HCT116 (cell line): ENCODE measurements at regions of chr20 and their contacts with region 1.

Region 1: DNA sequence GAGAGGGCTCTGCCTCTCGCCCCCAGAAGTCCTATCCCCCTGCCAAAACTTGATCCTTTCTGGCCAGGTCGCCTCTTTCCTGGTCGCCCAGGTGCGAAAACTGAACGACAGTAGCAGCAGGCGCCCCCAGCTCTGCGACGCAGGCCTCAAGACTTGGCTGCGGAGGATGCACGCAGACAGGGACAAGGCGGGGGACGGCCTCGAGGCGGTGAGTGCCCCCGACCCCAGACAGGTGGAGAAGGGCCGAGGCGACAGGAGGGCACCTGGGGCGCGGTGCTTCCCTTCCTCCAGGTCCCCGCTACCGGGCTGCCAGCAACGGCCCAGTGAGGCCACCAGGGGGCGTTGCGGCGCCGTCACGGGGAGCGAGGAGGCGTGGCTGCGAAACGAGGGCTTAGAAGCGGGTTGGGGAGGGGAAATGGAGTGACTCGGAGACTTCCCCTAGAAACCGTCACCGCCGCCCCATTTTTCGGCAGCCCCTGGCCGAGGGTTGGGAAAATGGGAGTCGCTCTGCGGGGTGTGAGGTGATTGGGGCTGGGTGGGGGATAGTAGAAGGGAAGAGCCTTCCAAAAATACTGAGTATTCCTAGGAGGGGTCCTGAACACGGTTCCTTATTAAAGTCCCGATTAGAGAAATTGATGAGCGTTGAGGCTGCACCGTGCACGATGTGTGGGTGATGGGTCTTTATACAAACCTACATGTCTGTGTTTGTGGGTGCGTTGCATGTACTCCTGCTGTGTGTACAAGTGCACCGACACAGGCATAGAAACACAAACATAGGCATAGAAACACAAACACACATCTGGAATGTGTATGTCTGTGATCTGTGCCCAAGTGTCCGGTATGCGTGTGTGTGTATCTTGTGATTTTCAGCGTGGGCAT is 44.6 kb downstream of the ARHGAP40 start:
- DNase-seq: peak; percentile 43
- ATAC-seq: peak; percentile 93
- H3K4me3 ChIP-seq: peak overlapping the region; percentile 32 to 40
- H3K27ac ChIP-seq: no peak overlapping the region
- H3K4me1 ChIP-seq: peaks cover 2 to 12% of the 10 kb centered on the region in 2 experiments; a peak in 3 of 4 replicates
- H3K27me3 ChIP-seq: no peaks in the 10 kb centered on the region
- CTCF ChIP-seq: peak; percentile 84 to 93 (median 89)
- POLR2A ChIP-seq: no peak
- RAD21 ChIP-seq: peak; percentile 95

Region 2: DNA sequence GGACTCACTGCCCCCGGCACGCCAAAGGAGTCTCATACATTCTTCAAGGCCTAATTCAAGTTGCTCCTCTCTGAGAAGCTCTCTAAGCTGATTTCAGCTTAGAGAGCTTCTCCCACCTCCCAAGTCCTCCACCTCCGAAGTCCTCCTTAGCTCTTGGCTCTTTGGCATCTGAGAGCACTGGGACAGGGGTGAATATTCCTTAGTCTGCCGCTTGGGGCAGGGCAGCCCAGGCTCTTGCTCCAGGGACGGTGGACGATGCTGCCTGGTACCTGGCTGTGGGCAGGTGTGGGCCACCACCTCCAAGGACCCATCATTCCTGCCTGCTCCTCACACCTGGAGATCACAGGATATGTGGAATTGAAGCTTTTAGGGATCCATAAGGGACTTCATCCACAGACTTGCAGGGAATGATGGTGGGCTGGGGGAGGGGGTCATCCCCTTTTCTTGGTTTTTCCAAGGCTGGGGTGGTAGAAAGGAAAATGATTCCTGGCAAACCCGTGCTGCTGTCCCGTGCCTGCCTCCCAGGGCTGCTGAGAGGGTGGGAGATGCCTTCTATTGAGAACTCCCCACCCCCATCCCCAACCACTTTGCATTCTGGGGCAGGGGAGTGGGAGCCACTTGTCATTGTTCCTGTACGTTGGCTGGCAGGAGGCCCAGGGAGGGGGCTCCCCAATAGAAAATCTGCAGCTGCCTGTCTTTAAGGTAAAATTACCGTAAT is 12.8 kb after region 1 on chr20:
- CTCF ChIA-PET with region 1: interaction called, 11 read pairs
- POLR2A ChIA-PET with region 1: no interaction called
- RAD21 ChIA-PET with region 1: interaction called in 1 of 2 experiments, 4 read pairs
- intact Hi-C with region 1: no loop called
- DNase-seq: peak; percentile 43
- ATAC-seq: peak; percentile 100
- H3K4me3 ChIP-seq: no peak overlapping the region
- H3K27ac ChIP-seq: no peak overlapping the region
- H3K4me1 ChIP-seq: peaks cover 0 to 5% of the 10 kb centered on the region in 2 experiments; a peak in 1 of 4 replicates
- H3K27me3 ChIP-seq: no peaks in the 10 kb centered on the region
- CTCF ChIP-seq: peak; percentile 43 to 85 (median 82); a peak in 5 of 6 replicates
- POLR2A ChIP-seq: no peak
- RAD21 ChIP-seq: peak; percentile 63

Region 3: GRCh38 chr20:38730989-38731737 is 84.9 kb after region 1 on chr20:
- CTCF ChIA-PET with region 1: interaction called, 4 read pairs
- POLR2A ChIA-PET with region 1: no interaction called
- RAD21 ChIA-PET with region 1: no interaction called
- intact Hi-C with region 1: loop called (anchors 5 kb)
- DNase-seq: peak; percentile 73
- ATAC-seq: peak; percentile 87
- H3K4me3 ChIP-seq: peak overlapping the region; percentile 46 to 64
- H3K27ac ChIP-seq: peak overlapping the region; percentile 57
- H3K4me1 ChIP-seq: peaks cover 4 to 21% of the 10 kb centered on the region in 2 experiments; a peak in 3 of 4 replicates
- H3K27me3 ChIP-seq: no peaks in the 10 kb centered on the region
- CTCF ChIP-seq: peak; percentile 64 to 99 (median 99); a peak in 5 of 6 replicates
- POLR2A ChIP-seq: no peak
- RAD21 ChIP-seq: peak; percentile 59

Region 4: GRCh38 chr20:38748097-38748860 is 102.1 kb after region 1 on chr20 and contains the start of gene ACTR5:
- CTCF ChIA-PET with region 1: interaction called, 7 read pairs
- POLR2A ChIA-PET with region 1: no interaction called
- RAD21 ChIA-PET with region 1: no interaction called
- intact Hi-C with region 1: loop called (anchors 1 kb)
- DNase-seq: peak; percentile 74
- ATAC-seq: peak; percentile 88
- H3K4me3 ChIP-seq: peak within 1 kb of the TSS; percentile 72 to 84
- H3K27ac ChIP-seq: peak within 1 kb of the TSS; percentile 82
- H3K4me1 ChIP-seq: peaks cover 8 to 24% of the 10 kb centered on the region in 2 experiments; a peak in 3 of 4 replicates
- H3K27me3 ChIP-seq: no peaks in the 10 kb centered on the region
- CTCF ChIP-seq: no peak
- POLR2A ChIP-seq: peak; percentile 35
- RAD21 ChIP-seq: no peak
- total RNA-seq, gene ACTR5: 22.0 TPM

Region 5: DNA sequence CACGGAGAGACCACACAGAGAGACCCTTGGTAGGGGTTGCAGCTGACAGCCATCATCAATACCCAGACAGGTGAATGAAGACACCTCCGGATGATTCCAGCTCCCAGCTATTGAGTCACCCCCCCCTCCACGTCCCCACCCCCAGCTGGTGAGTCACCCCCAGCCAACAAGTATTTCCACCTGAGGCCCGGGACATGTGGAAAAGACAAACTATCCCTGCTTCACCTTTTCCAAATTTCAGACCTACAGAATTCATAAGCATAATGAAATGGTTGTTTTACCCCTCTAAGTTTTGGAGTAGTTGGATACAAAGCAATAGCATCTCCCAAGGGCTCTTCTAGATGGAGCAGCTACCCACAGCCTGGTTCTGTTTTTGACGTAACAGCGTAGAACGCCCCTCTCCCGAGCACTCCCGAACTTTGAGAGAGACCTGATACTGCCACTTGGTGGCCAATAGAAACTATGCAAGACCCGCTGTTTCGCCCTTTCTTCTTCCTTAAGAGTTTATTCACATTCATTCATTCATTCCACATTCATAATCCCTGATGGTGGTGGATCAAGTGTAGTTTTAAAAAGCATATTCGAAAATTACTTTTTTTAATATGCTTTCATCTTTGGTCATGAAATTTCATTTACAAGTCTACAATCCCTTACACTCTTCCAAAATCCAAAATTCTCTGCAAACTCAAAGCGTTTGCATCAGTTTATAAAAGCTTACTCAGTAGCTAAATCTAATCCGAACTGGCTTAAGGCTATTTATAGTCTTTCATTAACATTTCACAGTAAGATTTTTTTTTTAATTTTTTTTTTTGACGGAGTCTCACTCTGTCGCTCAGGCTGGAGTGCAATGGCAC is 144.2 kb after region 1 on chr20:
- CTCF ChIA-PET with region 1: interaction called, 8 read pairs
- POLR2A ChIA-PET with region 1: no interaction called
- RAD21 ChIA-PET with region 1: no interaction called
- intact Hi-C with region 1: loop called (anchors 1 kb)
- DNase-seq: peak; percentile 68
- ATAC-seq: peak; percentile 89
- H3K4me3 ChIP-seq: peak overlapping the region in 1 of 2 experiments; percentile 24; a peak in 2 of 4 replicates
- H3K27ac ChIP-seq: peak overlapping the region; percentile 47
- H3K4me1 ChIP-seq: peaks cover 19 to 37% of the 10 kb centered on the region in 2 experiments
- H3K27me3 ChIP-seq: no peaks in the 10 kb centered on the region
- CTCF ChIP-seq: peak; percentile 66 to 80 (median 68); a peak in 5 of 6 replicates
- POLR2A ChIP-seq: no peak
- RAD21 ChIP-seq: peak; percentile 79

Region 6: GRCh38 chr20:38893565-38894090 is 247.4 kb after region 1 on chr20:
- CTCF ChIA-PET with region 1: interaction called, 4 read pairs
- POLR2A ChIA-PET with region 1: no interaction called
- RAD21 ChIA-PET with region 1: no interaction called
- intact Hi-C with region 1: loop called (anchors 1 kb)
- DNase-seq: peak; percentile 19
- ATAC-seq: peak; percentile 98
- H3K4me3 ChIP-seq: no peak overlapping the region
- H3K27ac ChIP-seq: no peak overlapping the region
- H3K4me1 ChIP-seq: peaks cover 5 to 17% of the 10 kb centered on the region in 2 experiments; a peak in 3 of 4 replicates
- H3K27me3 ChIP-seq: peaks cover 5% of the 10 kb centered on the region; the same call in 1 of the 2 replicates
- CTCF ChIP-seq: peak; percentile 77 to 94 (median 85)
- POLR2A ChIP-seq: no peak
- RAD21 ChIP-seq: peak; percentile 91

Region 7: DNA sequence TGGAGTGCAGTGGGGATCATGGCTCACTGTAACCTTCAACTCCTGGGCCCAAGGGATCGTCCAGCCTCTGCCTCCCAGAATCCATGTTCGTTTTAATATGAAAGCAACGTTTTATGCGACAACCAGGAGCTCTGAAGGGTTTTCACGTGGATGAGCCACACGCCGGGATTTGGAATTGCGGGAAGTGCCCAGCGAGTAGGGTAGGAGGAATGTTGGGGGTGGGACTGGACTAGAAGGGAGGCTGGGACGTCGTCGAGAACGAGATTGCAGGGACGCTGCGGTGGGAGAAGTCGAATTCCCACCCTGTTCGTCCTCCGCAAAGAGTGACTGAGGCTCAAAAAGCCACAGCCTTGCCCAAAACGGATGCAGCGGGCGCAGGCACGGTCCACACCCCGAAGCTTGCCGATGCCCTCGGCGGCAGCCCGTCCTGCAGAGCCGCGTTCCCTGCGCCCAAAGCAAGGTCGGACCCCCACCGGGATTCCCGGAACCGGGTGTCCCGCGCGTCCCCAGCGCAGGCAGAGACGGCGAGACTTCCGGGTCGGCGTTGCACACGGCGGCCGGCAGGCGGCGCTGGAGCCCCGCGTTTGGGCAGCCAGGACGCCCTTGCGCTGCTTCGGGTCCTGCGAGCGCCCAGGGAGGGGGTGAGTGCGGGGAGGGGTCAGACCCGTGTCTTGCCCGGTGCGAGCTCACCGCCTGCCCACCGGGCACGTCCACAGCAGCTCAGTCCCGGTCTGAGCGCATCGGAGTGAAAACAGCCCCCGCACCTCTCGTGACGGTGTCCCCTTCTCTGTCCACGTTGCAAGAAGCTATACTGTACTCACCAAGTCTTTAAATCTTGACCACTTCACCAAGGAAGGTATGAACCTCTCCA is 403.7 kb after region 1 on chr20:
- CTCF ChIA-PET with region 1: interaction called, 3 read pairs
- POLR2A ChIA-PET with region 1: no interaction called
- RAD21 ChIA-PET with region 1: no interaction called
- intact Hi-C with region 1: loop called (anchors 1 kb)
- DNase-seq: peak; percentile 40
- ATAC-seq: peak; percentile 88
- H3K4me3 ChIP-seq: peak overlapping the region; percentile 56 to 66
- H3K27ac ChIP-seq: peak overlapping the region; percentile 58; the same call in 1 of the 2 replicates
- H3K4me1 ChIP-seq: peaks cover 4 to 15% of the 10 kb centered on the region in 2 experiments; a peak in 3 of 4 replicates
- H3K27me3 ChIP-seq: no peaks in the 10 kb centered on the region
- CTCF ChIP-seq: peak; percentile 78 to 94 (median 81)
- POLR2A ChIP-seq: no peak
- RAD21 ChIP-seq: peak; percentile 94